ENCODE measurements at regions of chr9 and their contacts with region 1.

Region 1: GRCh38 chr9:114653556-114654159 is 3.9 kb downstream of the TEX53 start:
- DNase-seq: peak; percentile 83
- ATAC-seq: peak; percentile 85
- H3K4me3 ChIP-seq: no peak overlapping the region
- H3K27ac ChIP-seq: no peak overlapping the region
- H3K4me1 ChIP-seq: no peaks in the 10 kb centered on the region
- H3K27me3 ChIP-seq: no peaks in the 10 kb centered on the region
- CTCF ChIP-seq: peak; percentile 89

Region 2: DNA sequence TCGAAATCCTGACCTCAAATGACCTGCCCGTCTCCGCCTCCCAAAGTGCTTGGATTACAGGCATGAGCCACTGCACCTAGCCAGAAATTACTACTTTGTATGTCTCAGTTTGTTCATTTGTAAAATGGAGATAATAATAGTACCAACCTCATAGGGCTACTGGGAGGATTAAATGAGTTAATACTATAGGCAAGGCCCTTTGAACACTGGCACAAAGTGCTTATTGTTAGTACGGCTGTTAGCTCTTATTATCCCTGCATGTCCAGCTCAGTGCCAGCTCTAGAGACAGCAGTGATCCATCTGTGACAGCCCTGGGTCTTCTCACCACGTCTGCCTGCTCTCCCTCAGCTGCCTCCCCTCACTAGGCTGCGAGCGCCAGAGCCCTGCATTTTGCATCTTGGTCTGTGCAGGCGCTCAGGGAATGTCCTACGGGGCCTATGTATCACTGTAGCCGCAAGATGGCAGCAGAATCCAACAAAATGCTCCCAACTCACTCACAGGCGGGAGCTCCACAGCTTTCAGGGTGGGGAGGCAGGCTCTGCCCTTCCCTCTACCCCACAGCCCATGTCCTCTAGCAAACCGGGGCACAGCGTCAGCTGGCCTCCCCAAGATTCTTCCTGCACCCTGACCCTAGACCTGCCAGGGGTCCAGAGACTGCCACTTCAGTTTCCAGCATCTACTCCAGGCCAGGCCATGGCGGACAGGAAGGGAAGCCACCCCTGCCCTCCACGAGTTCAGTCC is 248.2 kb before region 1 on chr9:
- CTCF ChIA-PET with region 1: interaction called, 10 read pairs
- POLR2A ChIA-PET with region 1: no interaction called
- intact Hi-C with region 1: loop called (anchors 10 kb)
- DNase-seq: peak; percentile 73
- ATAC-seq: peak; percentile 84
- H3K4me3 ChIP-seq: no peak overlapping the region
- H3K27ac ChIP-seq: no peak overlapping the region
- H3K4me1 ChIP-seq: no peaks in the 10 kb centered on the region
- H3K27me3 ChIP-seq: no peaks in the 10 kb centered on the region
- CTCF ChIP-seq: peak; percentile 77

Region 3: GRCh38 chr9:114434878-114435311 is 218.8 kb before region 1 on chr9:
- CTCF ChIA-PET with region 1: no interaction called
- POLR2A ChIA-PET with region 1: no interaction called
- intact Hi-C with region 1: loop called (anchors 1 kb)
- DNase-seq: peak; percentile 49
- ATAC-seq: peak; percentile 60; the same call in 1 of the 2 replicates
- H3K4me3 ChIP-seq: no peak overlapping the region
- H3K27ac ChIP-seq: no peak overlapping the region
- H3K4me1 ChIP-seq: peaks cover 4% of the 10 kb centered on the region; the same call in 1 of the 2 replicates
- H3K27me3 ChIP-seq: no peaks in the 10 kb centered on the region
- CTCF ChIP-seq: peak; percentile 67

Region 4: DNA sequence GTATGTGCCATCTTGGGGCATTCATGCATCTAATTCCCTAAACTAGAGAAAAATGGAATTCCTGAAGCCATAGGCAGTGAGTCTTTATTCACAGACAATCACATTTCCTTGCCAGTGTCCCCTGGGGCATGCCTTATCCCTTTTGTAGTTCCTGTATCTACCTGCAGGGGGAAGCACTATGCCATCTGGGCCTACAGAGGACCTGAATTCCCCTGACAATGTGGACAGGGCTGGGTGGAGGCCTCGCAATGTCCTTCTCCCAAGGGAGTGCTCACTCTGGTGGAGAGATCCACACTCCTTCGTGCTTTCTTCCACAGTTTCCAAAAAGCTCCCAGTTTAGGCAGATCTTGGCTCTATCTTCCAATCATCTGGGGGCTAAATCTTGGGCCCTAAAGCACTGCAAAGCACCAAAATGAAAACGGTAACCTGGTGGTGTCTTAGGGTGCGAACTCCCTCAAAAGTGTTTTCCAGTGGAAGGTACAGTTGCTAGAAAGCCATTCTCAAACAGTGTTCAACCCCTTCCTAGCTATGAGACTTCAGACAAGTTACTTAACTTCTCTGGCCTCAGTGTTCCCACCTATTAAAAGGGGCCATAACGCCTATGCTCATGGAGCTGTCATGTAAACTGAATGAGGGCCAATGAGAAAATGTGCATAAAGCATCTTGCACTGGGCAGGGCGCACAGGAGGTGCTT is 165.9 kb before region 1 on chr9:
- CTCF ChIA-PET with region 1: interaction called, 9 read pairs
- POLR2A ChIA-PET with region 1: no interaction called
- intact Hi-C with region 1: loop called (anchors 1 kb)
- DNase-seq: peak; percentile 82
- ATAC-seq: peak; percentile 90
- H3K4me3 ChIP-seq: no peak overlapping the region
- H3K27ac ChIP-seq: no peak overlapping the region
- H3K4me1 ChIP-seq: peaks cover 9% of the 10 kb centered on the region
- H3K27me3 ChIP-seq: no peaks in the 10 kb centered on the region
- CTCF ChIP-seq: peak; percentile 84

Region 5: DNA sequence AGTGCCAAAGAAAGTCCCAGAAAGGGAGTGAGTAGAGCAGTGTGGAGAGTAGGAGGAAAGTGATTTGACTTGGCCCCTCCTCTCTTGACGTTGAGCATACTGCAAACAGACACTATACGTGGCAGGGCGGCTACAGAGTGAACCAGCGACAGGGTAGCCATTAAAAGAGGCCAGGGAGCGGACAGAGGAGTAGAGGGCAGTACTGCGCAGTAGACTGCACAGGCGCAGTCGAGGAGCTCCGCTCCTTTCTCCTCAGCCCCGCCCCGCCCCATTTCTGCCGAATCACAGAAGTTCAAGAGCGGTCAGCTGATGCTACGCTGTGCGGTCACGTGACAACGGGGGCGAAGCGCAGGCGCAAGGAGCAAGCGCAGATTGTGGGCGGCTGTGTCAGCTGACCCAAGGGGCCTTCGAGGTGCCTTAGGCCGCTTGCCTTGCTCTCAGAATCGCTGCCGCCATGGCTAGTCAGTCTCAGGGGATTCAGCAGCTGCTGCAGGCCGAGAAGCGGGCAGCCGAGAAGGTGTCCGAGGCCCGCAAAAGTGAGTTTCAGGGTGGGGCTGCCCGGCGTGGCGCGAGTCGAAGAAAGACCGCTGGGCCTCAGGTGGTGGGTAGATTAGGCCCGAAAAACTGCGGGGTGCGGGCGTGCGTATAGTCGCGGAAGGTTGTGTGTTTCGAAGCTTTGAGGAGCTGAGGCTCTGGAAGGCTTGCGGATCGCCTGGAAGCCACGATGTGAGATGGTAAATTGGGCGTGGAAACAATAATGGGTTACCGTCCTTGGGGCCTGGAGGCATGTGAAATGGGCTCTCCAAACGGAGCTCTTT is 66.1 kb before region 1 on chr9 and contains the start of gene ATP6V1G1:
- CTCF ChIA-PET with region 1: interaction called, 14 read pairs
- POLR2A ChIA-PET with region 1: interaction called, 3 read pairs
- intact Hi-C with region 1: loop called (anchors 1 kb)
- DNase-seq: peak; percentile 97
- ATAC-seq: peak; percentile 93
- H3K4me3 ChIP-seq: peak within 1 kb of the TSS; percentile 94
- H3K27ac ChIP-seq: peak within 1 kb of the TSS; percentile 74
- H3K4me1 ChIP-seq: peaks cover 20% of the 10 kb centered on the region
- H3K27me3 ChIP-seq: no peaks in the 10 kb centered on the region
- CTCF ChIP-seq: no peak
- total RNA-seq, gene ATP6V1G1: 126 and 162 TPM in 2 replicates

Region 6: DNA sequence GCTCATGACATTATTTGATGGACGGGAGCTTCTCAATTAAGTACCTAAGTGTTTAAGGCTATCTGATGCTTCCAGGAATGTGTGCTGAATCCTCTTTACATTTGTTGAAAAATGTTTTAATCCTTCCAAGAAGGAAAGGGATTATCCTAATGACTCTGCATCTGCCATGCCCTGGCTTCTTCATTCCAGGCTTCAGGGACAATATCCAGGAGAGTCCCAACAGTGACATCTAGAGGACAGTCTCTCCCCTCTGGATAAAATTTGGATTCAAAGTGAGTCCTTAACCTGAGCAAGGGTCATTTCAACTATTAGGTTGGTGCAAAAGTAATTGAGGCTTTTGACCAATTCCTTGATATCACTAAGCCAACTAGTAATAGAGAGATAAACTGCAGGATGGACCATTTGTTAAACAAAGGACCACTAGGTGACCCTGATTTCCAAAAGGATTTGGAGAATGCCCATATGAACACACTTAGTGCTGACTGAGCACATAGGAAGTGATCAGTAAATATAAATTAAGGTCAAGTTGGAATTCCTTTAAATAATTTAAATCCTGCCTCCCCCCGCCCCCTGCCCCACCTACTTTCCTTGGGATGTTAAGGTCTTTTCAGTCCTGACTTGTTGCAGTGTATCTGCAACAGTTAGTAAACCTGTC is 257.6 kb after region 1 on chr9:
- CTCF ChIA-PET with region 1: no interaction called
- POLR2A ChIA-PET with region 1: no interaction called
- intact Hi-C with region 1: no loop called
- DNase-seq: peak; percentile 74
- ATAC-seq: 0 out of 2 replicates have a peak, but pooled peaks have one; percentile 9
- H3K4me3 ChIP-seq: no peak overlapping the region
- H3K27ac ChIP-seq: peak overlapping the region; percentile 12
- H3K4me1 ChIP-seq: peaks cover 35% of the 10 kb centered on the region
- H3K27me3 ChIP-seq: no peaks in the 10 kb centered on the region
- CTCF ChIP-seq: peak; percentile 83

Measured in PC-3 (cell line).